Caco-2 (cell line): ENCODE measurements at regions of chr4 and their contacts with region 1.

Region 1: DNA sequence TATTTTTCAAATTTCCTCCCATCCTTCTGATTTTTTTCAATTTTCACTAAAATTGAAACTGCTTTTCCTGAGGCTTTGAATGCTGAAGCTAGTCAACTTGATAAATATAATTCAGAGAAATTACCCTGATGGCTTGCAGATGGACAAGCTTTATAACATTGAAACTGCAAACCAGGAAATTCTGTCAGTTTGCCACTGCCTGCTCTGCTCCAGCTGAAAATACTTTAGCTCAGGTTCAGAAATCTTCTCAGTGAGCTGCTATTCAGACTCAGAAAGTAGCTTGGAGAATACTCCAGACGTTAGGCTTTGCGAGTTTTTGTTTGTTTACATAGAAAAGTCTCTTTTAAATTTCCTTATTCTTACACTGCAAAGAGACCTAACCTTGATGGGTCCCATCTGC is 1574.7 kb downstream of the STIM2 start:
- DNase-seq: peak in 1 of 2 experiments; percentile 2
- H3K4me3 ChIP-seq: no peak overlapping the region
- H3K4me3 Mint-ChIP-seq: peak overlapping the region; percentile 67
- H3K27ac Mint-ChIP-seq: peak overlapping the region; percentile 94
- H3K4me1 ChIP-seq: peaks cover 55% of the 10 kb centered on the region
- H3K4me1 Mint-ChIP-seq: peaks cover 27% of the 10 kb centered on the region
- H3K27me3 ChIP-seq: no peaks in the 10 kb centered on the region
- H3K27me3 Mint-ChIP-seq: no peaks in the 10 kb centered on the region
- CTCF ChIP-seq: no peak

Region 2: GRCh38 chr4:28277931-28278330 is 157.4 kb before region 1 on chr4:
- CTCF ChIA-PET with region 1: no interaction called
- POLR2A ChIA-PET with region 1: no interaction called
- intact Hi-C with region 1: loop called (anchors 1 kb)
- DNase-seq: peak; percentile 61 to 62
- H3K4me3 ChIP-seq: no peak overlapping the region
- H3K4me3 Mint-ChIP-seq: peak overlapping the region; percentile 25
- H3K27ac Mint-ChIP-seq: peak overlapping the region; percentile 87
- H3K4me1 ChIP-seq: peaks cover 53% of the 10 kb centered on the region
- H3K4me1 Mint-ChIP-seq: peaks cover 39% of the 10 kb centered on the region
- H3K27me3 ChIP-seq: no peaks in the 10 kb centered on the region
- H3K27me3 Mint-ChIP-seq: no peaks in the 10 kb centered on the region
- CTCF ChIP-seq: no peak

Region 3: GRCh38 chr4:28357990-28358389 is 77.3 kb before region 1 on chr4:
- CTCF ChIA-PET with region 1: no interaction called
- POLR2A ChIA-PET with region 1: no interaction called
- intact Hi-C with region 1: loop called (anchors 2 kb)
- DNase-seq: peak; percentile 38 to 43
- H3K4me3 ChIP-seq: no peak overlapping the region
- H3K4me3 Mint-ChIP-seq: no peak overlapping the region
- H3K27ac Mint-ChIP-seq: no peak overlapping the region
- H3K4me1 ChIP-seq: no peaks in the 10 kb centered on the region
- H3K4me1 Mint-ChIP-seq: no peaks in the 10 kb centered on the region
- H3K27me3 ChIP-seq: no peaks in the 10 kb centered on the region
- H3K27me3 Mint-ChIP-seq: no peaks in the 10 kb centered on the region
- CTCF ChIP-seq: peak in 1 of 2 experiments; percentile 41